ENCODE measurements at regions of chrX and their contacts with region 1.

Region 1: DNA sequence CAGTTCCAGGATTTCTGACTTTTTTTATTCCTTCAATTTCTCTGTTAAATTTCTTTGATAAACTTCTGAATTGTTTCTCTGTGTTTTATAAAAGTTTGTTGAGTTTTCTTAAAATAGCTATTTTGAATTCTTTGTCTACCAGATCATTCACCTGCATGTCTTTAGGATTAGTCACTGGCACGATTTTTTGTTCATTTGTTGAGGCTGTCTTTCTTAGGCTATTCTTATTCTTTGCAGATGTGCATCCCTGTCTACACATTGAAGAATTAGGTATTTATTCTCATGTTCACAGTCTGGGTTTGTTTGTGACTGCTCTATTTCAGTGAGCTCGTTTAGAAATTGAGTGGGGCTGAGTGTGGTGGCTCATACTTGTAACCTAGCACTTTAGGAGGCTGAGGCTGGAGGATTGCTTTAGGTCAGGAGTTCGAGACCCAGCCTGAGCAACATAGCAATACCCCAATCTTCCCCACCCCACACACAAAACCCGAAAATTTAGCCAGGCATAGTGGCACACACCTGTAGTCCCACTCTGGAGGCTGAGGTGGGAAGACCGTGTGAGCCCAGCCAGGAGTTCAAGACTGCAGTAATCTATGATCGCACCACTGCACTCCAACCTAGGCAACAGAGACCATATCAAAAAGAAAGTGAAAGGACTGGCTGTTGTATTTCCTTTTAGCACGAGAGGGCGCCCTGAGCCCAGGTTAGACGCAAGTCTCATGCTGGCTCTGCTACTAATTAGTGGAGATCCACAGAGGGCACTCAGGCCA is 42.0 kb downstream of the F8 start:
- DNase-seq: peak; percentile 51 to 68 (median 60)
- H3K4me3 ChIP-seq: peak overlapping the region; percentile 32 to 72 (median 37)
- H3K4me3 Mint-ChIP-seq: peak overlapping the region; percentile 78 to 89
- H3K27ac ChIP-seq: peak overlapping the region in 1 of 2 donors; percentile 79
- H3K27ac Mint-ChIP-seq: peak overlapping the region in 5 of 7 donors; percentile 55 to 89 (median 81)
- H3K4me1 ChIP-seq: peaks cover 2 to 4% of the 10 kb centered on the region in 2 donors
- H3K4me1 Mint-ChIP-seq: peaks cover 16% of the 10 kb centered on the region
- H3K27me3 ChIP-seq: no peaks in the 10 kb centered on the region
- H3K27me3 Mint-ChIP-seq: peaks cover 0 to 1% (median 0%) of the 10 kb centered on the region in 3 donors
- CTCF ChIP-seq: peak; percentile 48

Region 2: GRCh38 chrX:155056877-155057792 is 76.6 kb after region 1 on chrX:
- intact Hi-C with region 1: loop called (anchors 2 to 10 kb)
- DNase-seq: peak; percentile 47 to 62 (median 52)
- H3K4me3 ChIP-seq: peak overlapping the region in 1 of 3 experiments; percentile 49
- H3K4me3 Mint-ChIP-seq: peak overlapping the region; percentile 39 to 57
- H3K27ac ChIP-seq: no peak overlapping the region
- H3K27ac Mint-ChIP-seq: no peak overlapping the region
- H3K4me1 ChIP-seq: peaks cover 6% of the 10 kb centered on the region in 2 donors
- H3K4me1 Mint-ChIP-seq: peaks cover 10% of the 10 kb centered on the region
- H3K27me3 ChIP-seq: no peaks in the 10 kb centered on the region
- H3K27me3 Mint-ChIP-seq: no peaks in the 10 kb centered on the region
- CTCF ChIP-seq: peak; percentile 70

Measured in CD14-positive monocyte (primary cell).